Activated CD4-positive, alpha-beta memory T cell treated with anti-CD3 and anti-CD28 coated beads for 36 hours (primary cell): ENCODE measurements at regions of chr11 and their contacts with region 1.

Region 1: GRCh38 chr11:128884703-128885338 is 6.3 kb upstream of the KCNJ5 start:
- DNase-seq: peak; percentile 71
- H3K4me3 Mint-ChIP-seq: no peak overlapping the region
- H3K27ac Mint-ChIP-seq: no peak overlapping the region
- H3K4me1 Mint-ChIP-seq: no peaks in the 10 kb centered on the region
- H3K27me3 Mint-ChIP-seq: peaks cover 36% of the 10 kb centered on the region

Region 2: DNA sequence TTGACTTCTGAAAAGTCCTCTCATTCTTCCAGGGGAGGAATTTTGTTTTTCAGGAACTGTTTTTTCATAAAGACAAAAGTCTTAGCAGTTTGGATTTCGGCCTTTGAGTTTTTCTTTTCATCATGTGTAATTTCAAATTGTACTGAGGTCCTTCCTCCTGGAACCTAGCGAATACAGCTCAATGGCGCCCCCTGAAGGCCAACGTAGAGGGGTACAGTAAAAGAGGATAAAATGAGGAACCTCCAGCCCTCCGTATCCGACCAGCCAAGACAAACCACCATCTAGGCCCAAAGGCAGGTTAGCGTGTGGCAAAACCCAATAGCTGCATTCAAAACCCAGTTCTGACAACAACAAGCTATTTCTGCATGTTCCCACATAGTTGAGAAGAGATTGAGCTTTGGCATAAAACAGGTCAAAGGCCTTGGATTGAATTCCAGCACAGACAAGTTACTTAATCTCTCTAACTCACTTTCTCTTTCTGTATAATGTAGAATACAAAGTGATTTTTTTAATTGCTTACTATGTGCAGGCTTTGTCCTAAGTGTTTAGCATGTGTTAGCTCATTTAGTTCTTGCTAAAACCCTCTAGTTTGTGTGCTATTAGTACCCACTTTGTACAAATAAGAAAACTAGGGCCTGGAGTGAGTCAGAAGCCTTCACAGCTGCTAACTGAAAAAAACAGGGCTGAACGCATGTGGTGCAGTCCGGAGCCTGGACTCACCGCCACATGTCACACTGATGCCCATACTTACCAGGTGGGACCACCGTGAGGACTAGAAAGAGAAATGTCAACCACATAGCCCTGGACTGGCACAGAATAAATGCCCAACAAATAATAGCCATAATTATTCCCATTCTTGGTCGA is 254.2 kb before region 1 on chr11:
- CTCF ChIA-PET with region 1: no interaction called
- POLR2A ChIA-PET with region 1: no interaction called
- intact Hi-C with region 1: no loop called
- DNase-seq: peak; percentile 94
- H3K4me3 Mint-ChIP-seq: peak overlapping the region; percentile 65
- H3K27ac Mint-ChIP-seq: peak overlapping the region; percentile 92
- H3K4me1 Mint-ChIP-seq: peaks cover 66% of the 10 kb centered on the region
- H3K27me3 Mint-ChIP-seq: no peaks in the 10 kb centered on the region

Region 3: GRCh38 chr11:128874427-128874826 is 10.4 kb before region 1 on chr11:
- CTCF ChIA-PET with region 1: interaction called, 20 read pairs
- POLR2A ChIA-PET with region 1: no interaction called
- intact Hi-C with region 1: no loop called
- DNase-seq: no peak
- H3K4me3 Mint-ChIP-seq: no peak overlapping the region
- H3K27ac Mint-ChIP-seq: no peak overlapping the region
- H3K4me1 Mint-ChIP-seq: no peaks in the 10 kb centered on the region
- H3K27me3 Mint-ChIP-seq: no peaks in the 10 kb centered on the region

Region 4: DNA sequence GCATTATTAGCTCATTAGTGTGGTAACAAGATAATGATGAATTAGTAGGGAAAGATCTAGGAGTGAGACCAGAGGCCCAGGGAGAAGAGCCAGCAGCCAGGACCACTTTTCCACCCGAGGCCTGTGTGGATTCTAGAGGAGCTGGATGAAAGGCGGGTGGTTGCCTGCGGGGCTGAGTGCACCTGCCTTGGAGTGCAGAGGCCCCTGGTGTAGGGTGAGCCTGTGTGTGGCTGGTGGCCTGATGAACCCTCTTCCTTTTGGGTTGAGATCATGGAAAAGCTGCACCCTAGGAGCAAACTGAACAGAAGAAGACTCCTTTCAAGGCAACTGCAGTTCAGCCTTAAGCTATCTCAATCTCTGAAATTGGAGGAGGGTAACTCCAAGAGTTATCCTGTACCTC is 63.8 kb after region 1 on chr11:
- CTCF ChIA-PET with region 1: interaction called, 243 read pairs
- POLR2A ChIA-PET with region 1: no interaction called
- intact Hi-C with region 1: no loop called
- DNase-seq: no peak
- H3K4me3 Mint-ChIP-seq: no peak overlapping the region
- H3K27ac Mint-ChIP-seq: no peak overlapping the region
- H3K4me1 Mint-ChIP-seq: no peaks in the 10 kb centered on the region
- H3K27me3 Mint-ChIP-seq: peaks cover 12% of the 10 kb centered on the region

Region 5: DNA sequence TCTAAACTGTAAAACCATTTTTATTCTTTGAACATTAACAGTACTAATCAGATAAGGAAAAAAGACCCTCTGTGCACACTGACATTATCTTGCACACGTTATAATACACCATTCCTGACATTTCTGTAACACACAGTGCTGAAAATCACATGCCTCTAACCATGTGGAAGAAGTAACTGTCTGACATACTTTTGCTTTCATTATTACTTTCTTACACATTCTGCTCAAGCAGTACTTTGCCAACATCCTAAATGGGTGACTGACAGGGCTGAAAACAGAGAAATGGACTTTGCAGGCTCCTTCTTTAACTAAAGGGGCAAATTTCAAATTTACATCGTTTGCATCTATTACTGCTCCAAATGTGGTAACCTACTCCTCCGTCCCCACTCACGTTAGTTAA is 80.7 kb after region 1 on chr11:
- CTCF ChIA-PET with region 1: interaction called, 243 read pairs
- POLR2A ChIA-PET with region 1: no interaction called
- intact Hi-C with region 1: no loop called
- DNase-seq: no peak
- H3K4me3 Mint-ChIP-seq: no peak overlapping the region
- H3K27ac Mint-ChIP-seq: no peak overlapping the region
- H3K4me1 Mint-ChIP-seq: peaks cover 30% of the 10 kb centered on the region
- H3K27me3 Mint-ChIP-seq: peaks cover 2% of the 10 kb centered on the region

Region 6: GRCh38 chr11:129331871-129332274 is 447.1 kb after region 1 on chr11:
- CTCF ChIA-PET with region 1: interaction called, 15 read pairs
- POLR2A ChIA-PET with region 1: no interaction called
- intact Hi-C with region 1: loop called (anchors 1 kb)
- DNase-seq: peak; percentile 78
- H3K4me3 Mint-ChIP-seq: no peak overlapping the region
- H3K27ac Mint-ChIP-seq: no peak overlapping the region
- H3K4me1 Mint-ChIP-seq: peaks cover 2% of the 10 kb centered on the region
- H3K27me3 Mint-ChIP-seq: no peaks in the 10 kb centered on the region